Transverse colon (tissue), 4 donors: ENCODE measurements at regions of chr5 and their contacts with region 1.

Region 1: DNA sequence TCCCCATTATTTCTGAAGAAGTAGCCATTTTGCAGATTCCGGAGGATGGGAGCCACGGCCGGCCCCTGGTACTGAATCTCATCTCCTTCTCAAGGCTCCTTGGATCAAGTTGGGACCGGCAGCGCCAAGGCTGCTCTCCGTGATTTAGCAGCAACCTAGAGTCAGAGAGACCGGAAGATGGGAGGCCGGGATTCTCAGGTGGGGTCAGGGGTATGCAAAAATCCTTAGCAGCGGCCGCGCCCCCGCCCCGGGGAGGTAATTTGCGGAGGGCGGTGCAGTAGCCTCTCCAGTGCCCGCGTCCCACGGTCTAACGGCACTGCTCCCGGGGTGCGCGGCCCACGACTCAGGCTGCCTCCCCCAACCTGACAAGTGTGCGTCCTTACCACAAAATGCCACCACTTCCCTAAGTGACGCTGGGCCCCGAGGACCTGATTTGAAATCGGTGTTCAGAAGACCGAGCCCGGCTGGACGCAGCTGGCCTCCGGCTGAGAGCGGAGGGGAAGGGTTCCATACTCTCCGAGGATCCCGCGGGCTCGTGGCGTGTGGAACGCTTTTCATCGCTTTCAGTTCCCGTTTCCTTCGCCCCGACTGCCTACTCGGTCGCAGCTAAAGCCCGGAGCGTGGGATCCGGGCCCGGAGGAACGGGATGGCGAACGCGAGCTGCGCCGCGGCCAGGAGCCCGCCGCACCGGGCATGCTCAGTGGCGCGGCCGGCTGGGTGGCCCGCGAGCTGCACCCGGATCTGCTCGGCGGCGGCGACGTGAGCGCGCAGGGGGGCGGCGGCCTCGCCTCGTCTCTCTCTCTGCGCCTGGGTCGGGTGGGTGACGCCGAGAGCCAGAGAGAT is at the start of gene SCAMP1:
- DNase-seq: peak; percentile 95
- H3K4me3 ChIP-seq: peak within 1 kb of the TSS; percentile 84 to 96 (median 88)
- H3K27ac ChIP-seq: peak within 1 kb of the TSS; percentile 89 to 98 (median 92)
- H3K4me1 ChIP-seq: peaks cover 8 to 30% (median 11%) of the 10 kb centered on the region in 4 donors
- H3K27me3 ChIP-seq: no peaks in the 10 kb centered on the region
- CTCF ChIP-seq: peak in 4 of 5 experiments; percentile 27 to 50 (median 39)
- EP300 ChIP-seq: no peak
- POLR2A ChIP-seq: peak; percentile 58
- total RNA-seq, gene SCAMP1: 10.5 to 24.7 (median 21.8) TPM

Region 2: GRCh38 chr5:78294248-78295034 is 65.6 kb before region 1 on chr5 and contains the start of gene AP3B1:
- in situ Hi-C with region 1: loop called in 3 of 4 experiments (anchors 5 kb)
- intact Hi-C with region 1: loop called (anchors 2 kb)
- DNase-seq: peak; percentile 99
- H3K4me3 ChIP-seq: peak within 1 kb of the TSS; percentile 61 to 95 (median 84)
- H3K27ac ChIP-seq: peak within 1 kb of the TSS; percentile 83 to 91 (median 88)
- H3K4me1 ChIP-seq: peaks cover 5 to 29% (median 12%) of the 10 kb centered on the region in 4 donors
- H3K27me3 ChIP-seq: no peaks in the 10 kb centered on the region
- CTCF ChIP-seq: no peak
- EP300 ChIP-seq: no peak
- POLR2A ChIP-seq: peak; percentile 96
- total RNA-seq, gene AP3B1: 45.7 to 61.3 (median 53.4) TPM

Region 3: DNA sequence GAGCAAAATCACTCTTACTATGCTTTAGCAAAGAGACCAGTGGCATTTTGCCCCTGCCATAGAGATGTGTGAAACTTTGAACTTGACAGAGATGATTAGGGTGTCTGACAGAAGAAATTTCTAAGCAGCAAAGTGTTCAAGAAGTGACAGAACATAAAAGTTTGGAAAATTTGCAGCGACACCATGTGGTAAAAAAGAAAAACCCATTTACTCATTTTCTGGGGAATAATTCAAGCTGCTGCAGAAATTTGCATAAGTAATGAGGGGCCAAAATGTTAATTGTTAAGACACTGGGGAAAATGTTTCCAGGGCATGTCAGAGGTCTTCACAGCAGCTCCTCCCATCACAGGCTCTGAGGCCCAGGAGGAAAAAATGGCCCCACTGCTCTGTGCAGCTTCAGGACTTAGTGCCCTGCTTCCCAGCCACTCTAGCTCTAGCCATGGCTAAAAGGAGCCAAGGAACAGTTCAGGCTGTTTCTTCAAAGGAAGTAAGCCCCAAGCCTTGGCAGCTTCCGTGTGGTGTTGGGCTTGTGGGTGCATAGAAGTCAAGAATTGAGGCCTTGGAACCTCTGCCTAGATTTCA is 59.5 kb before region 1 on chr5:
- in situ Hi-C with region 1: loop called (anchors 5 to 10 kb)
- intact Hi-C with region 1: loop called (anchors 2 kb)
- DNase-seq: no peak
- H3K4me3 ChIP-seq: no peak overlapping the region
- H3K27ac ChIP-seq: no peak overlapping the region
- H3K4me1 ChIP-seq: peaks cover 0 to 5% (median 3%) of the 10 kb centered on the region in 4 donors
- H3K27me3 ChIP-seq: no peaks in the 10 kb centered on the region
- CTCF ChIP-seq: peak in 2 of 5 experiments; percentile 18
- EP300 ChIP-seq: no peak
- POLR2A ChIP-seq: no peak

Region 4: GRCh38 chr5:78574731-78575161 is 214.7 kb after region 1 on chr5:
- in situ Hi-C with region 1: no loop called
- intact Hi-C with region 1: no loop called
- DNase-seq: no peak
- H3K4me3 ChIP-seq: no peak overlapping the region
- H3K27ac ChIP-seq: peak overlapping the region in 1 of 4 donors; percentile 15
- H3K4me1 ChIP-seq: peaks cover 0 to 33% (median 5%) of the 10 kb centered on the region in 4 donors
- H3K27me3 ChIP-seq: no peaks in the 10 kb centered on the region
- CTCF ChIP-seq: no peak
- EP300 ChIP-seq: no peak
- POLR2A ChIP-seq: no peak